ENCODE measurements at regions of chr4 and their contacts with region 1.

Region 1: DNA sequence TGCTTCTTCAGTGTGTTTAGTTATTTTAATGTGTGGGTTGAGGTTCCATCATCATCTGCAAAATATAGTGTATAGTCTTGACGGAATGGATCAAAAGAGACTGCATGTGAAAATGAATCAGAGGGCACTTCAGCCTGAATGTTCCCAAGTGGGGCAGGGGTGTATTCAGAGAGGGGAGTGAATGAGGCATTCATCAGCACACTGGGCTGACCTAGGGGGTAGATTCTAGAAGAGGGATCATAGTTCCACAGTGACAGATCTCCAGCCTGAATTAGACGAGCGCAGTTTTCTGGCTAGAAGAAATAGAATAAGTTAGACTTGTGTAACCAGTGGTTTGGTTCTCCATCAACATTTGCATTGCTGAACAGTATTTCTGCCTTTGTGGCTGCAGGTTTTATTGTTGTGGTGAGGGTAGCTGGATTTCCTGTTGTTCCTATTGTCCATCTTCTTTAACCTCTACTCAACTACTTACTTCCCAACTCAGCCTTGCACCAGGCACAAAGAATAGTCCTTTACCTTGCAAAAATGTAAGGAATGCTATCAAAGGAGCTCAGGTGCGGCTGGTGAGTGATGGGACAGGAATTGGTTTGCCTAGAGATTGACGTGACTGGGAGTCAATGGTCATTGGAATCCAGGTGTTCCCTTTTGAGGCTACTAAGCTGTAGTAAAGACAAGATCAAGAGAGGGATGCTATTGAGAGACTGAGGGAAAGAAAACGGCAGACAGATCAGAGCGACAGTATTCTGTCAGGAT is 50.9 kb downstream of the NAP1L5 start:
- DNase-seq: no peak
- ATAC-seq: no peak
- H3K4me3 ChIP-seq: no peak overlapping the region
- H3K27ac ChIP-seq: no peak overlapping the region
- H3K4me1 ChIP-seq: peaks cover 20% of the 10 kb centered on the region
- H3K27me3 ChIP-seq: no peaks in the 10 kb centered on the region
- CTCF ChIP-seq: no peak

Region 2: GRCh38 chr4:88549815-88550214 is 96.9 kb before region 1 on chr4:
- intact Hi-C with region 1: loop called in 1 of 2 experiments (anchors 5 kb)
- DNase-seq: no peak
- ATAC-seq: no peak
- H3K4me3 ChIP-seq: no peak overlapping the region
- H3K27ac ChIP-seq: no peak overlapping the region
- H3K4me1 ChIP-seq: no peaks in the 10 kb centered on the region
- H3K27me3 ChIP-seq: peaks cover 0 to 2% (median 0%) of the 10 kb centered on the region in 3 donors
- CTCF ChIP-seq: no peak

Region 3: DNA sequence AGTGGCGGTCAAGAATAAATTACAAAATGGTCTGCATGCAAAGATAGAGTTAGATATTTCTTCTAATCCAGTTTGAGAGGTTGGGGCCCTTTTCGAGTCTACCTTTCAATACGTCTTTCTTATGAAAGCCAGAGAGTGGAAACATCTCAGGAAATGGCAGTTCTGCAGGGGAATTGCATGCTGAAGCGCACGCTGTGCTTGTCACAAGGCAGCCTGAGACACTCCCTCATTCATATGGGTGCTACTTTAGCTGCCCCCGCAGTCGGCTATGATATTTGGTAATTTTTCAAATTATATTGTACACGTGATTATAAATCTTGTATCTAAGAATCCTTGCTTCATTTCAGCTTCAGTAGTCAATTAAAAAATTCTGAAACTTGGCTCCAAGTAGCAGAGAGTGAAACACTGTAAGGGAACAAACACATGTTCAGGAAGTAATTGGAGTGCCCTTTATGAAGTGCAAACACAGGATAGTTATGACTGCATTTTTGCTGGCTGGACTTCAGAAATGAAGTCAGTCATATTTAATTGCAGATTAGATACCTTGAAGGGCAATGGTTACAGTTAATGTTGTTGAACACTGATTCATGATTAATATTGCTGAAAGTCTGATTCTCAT is 196.5 kb after region 1 on chr4:
- intact Hi-C with region 1: no loop called
- DNase-seq: no peak
- ATAC-seq: peak; percentile 46 to 86 (median 70)
- H3K4me3 ChIP-seq: no peak overlapping the region
- H3K27ac ChIP-seq: no peak overlapping the region
- H3K4me1 ChIP-seq: peaks cover 11% of the 10 kb centered on the region
- H3K27me3 ChIP-seq: no peaks in the 10 kb centered on the region
- CTCF ChIP-seq: no peak

Measured in psoas muscle (tissue), 8 donors.